Thyroid gland (tissue), 4 donors: ENCODE measurements at regions of chr16 and their contacts with region 1.

Region 1: GRCh38 chr16:89241187-89242007 is 23.9 kb downstream of the ZNF778 start:
- DNase-seq: peak; percentile 53 to 64
- H3K4me3 ChIP-seq: peak overlapping the region; percentile 8 to 60 (median 14)
- H3K27ac ChIP-seq: peak overlapping the region; percentile 54 to 91 (median 77)
- H3K4me1 ChIP-seq: peaks cover 4% of the 10 kb centered on the region in 2 donors
- H3K27me3 ChIP-seq: no peaks in the 10 kb centered on the region
- CTCF ChIP-seq: no peak
- POLR2A ChIP-seq: peak in 1 of 2 donors; percentile 72

Region 2: GRCh38 chr16:89104930-89105571 is 136.3 kb before region 1 on chr16:
- intact Hi-C with region 1: no loop called
- DNase-seq: peak; percentile 77 to 96
- H3K4me3 ChIP-seq: no peak overlapping the region
- H3K27ac ChIP-seq: peak overlapping the region in 1 of 3 donors; percentile 45
- H3K4me1 ChIP-seq: no peaks in the 10 kb centered on the region
- H3K27me3 ChIP-seq: no peaks in the 10 kb centered on the region
- CTCF ChIP-seq: no peak
- POLR2A ChIP-seq: no peak

Region 3: DNA sequence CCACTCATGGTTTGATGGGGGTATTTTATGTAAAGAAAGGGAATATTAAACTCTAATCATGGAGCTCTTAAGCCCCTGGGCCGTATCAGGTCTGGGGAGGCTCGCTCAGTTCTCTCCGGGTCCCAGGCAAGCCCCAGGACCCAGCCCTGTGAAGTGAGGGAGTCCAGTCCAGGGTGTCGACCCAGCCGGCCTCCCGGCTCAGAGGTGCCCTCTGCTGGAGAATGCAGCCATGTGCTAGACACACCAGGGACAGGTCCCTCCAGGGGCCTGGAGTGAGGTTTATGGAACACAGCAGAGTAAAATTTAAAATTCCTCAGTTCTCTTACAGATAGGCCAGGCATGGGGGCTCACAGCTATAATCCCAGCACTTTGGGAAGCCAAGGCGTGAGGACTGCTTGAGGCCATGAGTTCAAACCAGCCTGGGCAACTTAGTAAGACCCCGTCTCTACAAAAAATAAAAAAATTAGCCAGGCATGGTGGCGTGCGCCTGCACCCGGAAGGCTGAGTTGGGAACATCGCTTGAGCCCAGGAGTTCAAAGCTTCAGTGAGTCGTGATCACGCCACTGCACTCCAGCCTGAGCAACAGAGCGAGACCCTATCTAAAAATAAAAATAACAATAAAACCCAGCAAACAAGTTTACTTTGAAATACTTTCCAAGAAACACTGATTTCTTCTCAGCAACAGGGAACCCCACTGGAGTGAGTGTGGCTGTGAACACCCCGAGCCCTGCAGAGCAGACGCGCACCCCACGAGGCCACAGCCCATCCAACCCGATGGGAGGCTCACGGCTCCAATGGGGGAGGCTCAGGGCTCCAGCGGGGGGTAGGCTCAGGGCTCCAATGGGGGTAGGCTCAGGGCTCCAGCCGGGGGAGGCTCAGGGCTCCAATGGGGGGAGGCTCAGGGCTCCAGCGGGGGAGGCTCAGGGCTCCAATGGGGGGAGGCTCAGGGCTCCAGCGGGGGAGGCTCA is 48.3 kb after region 1 on chr16:
- intact Hi-C with region 1: loop called (anchors 5 kb)
- DNase-seq: peak; percentile 61 to 74
- H3K4me3 ChIP-seq: no peak overlapping the region
- H3K27ac ChIP-seq: no peak overlapping the region
- H3K4me1 ChIP-seq: no peaks in the 10 kb centered on the region
- H3K27me3 ChIP-seq: no peaks in the 10 kb centered on the region
- CTCF ChIP-seq: peak; percentile 53 to 82 (median 62)
- POLR2A ChIP-seq: no peak